Activated naive CD4-positive, alpha-beta T cell treated with anti-CD3 and anti-CD28 coated beads for 36 hours (primary cell): ENCODE measurements at regions of chrX and their contacts with region 1.

Region 1: GRCh38 chrX:124274438-124275181 is 57.9 kb upstream of the TEX13D start:
- DNase-seq: peak; percentile 15
- H3K4me3 Mint-ChIP-seq: no peak overlapping the region
- H3K27ac Mint-ChIP-seq: no peak overlapping the region
- H3K4me1 Mint-ChIP-seq: peaks cover 12% of the 10 kb centered on the region
- H3K27me3 Mint-ChIP-seq: no peaks in the 10 kb centered on the region

Region 2: DNA sequence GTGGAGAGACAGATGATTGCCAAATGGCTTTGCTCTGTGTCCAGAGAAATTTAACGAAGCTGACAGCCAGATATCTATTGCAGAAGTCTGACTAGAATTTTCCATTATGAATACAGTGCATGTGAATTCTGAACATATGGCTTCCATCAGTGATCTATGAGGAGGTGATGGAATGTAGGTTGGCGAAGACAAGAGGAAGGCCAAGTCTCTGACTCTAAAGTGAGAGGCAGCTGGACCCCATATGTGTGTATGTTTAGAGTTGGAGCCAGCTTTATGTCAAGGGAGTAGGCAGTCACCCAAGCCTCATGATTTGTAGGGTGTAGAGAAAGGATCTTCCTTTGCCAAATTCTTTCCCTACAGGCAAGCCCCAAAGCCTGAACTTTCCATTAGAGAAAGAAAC is 18.4 kb before region 1 on chrX:
- CTCF ChIA-PET with region 1: no interaction called
- intact Hi-C with region 1: loop called (anchors 2 kb)
- DNase-seq: no peak
- H3K4me3 Mint-ChIP-seq: no peak overlapping the region
- H3K27ac Mint-ChIP-seq: no peak overlapping the region
- H3K4me1 Mint-ChIP-seq: peaks cover 27% of the 10 kb centered on the region
- H3K27me3 Mint-ChIP-seq: no peaks in the 10 kb centered on the region

Region 3: GRCh38 chrX:124406294-124407014 is 131.8 kb after region 1 on chrX:
- CTCF ChIA-PET with region 1: no interaction called
- intact Hi-C with region 1: no loop called
- DNase-seq: peak; percentile 83
- H3K4me3 Mint-ChIP-seq: no peak overlapping the region
- H3K27ac Mint-ChIP-seq: no peak overlapping the region
- H3K4me1 Mint-ChIP-seq: peaks cover 17% of the 10 kb centered on the region
- H3K27me3 Mint-ChIP-seq: no peaks in the 10 kb centered on the region